Panc1 (cell line): ENCODE measurements at regions of chr5 and their contacts with region 1.

Region 1: DNA sequence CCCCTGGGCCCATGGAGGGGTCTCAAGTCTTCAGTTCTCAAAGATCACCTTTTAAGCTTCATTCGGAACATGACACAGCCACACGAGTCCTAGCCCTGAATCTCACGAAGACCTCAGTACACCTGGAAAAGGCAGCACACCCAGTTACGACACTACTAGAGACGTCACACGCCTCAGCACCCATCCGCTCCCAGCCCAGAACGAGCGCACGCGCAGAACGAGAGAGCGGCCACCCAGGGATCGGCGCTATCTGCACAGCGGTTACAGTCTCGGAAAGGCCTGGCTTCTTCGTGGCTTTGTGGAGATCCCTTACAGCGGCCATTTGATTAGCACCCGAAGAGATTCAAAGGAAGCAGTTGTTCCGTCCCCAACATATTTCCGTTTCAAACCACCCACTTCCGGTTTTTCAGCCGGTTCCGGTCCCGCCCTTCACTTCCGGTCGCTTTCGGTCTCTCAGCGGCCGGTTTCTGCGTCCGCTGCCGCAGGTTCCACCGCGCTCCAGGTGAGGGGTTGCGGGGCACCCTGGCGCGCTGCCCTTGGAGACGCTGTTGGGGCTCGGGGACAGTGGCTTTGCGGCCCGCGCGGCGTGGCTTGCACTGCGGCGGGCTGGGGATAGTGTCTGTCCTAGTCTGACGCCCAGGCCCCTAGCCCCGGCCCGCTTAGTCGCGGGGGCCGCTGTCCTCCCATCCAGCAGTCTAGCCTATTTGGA is at the start of gene UBLCP1:
- DNase-seq: peak; percentile 85
- ATAC-seq: peak; percentile 96
- H3K4me3 ChIP-seq: peak within 1 kb of the TSS; percentile 75 to 99
- H3K27ac ChIP-seq: peak within 1 kb of the TSS; percentile 98
- H3K4me1 ChIP-seq: peaks cover 8% of the 10 kb centered on the region
- H3K27me3 ChIP-seq: no peaks in the 10 kb centered on the region
- CTCF ChIP-seq: no peak
- total RNA-seq, gene UBLCP1: 31.8 TPM

Region 2: GRCh38 chr5:159209438-159210305 is 53.3 kb before region 1 on chr5 and contains the start of gene RNF145:
- CTCF ChIA-PET with region 1: no interaction called
- POLR2A ChIA-PET with region 1: interaction called, 3 read pairs
- in situ Hi-C with region 1: no loop called
- intact Hi-C with region 1: loop called (anchors 5 kb)
- DNase-seq: peak; percentile 56
- ATAC-seq: peak; percentile 84
- H3K4me3 ChIP-seq: peak within 1 kb of the TSS; percentile 75 to 95
- H3K27ac ChIP-seq: peak within 1 kb of the TSS; percentile 89
- H3K4me1 ChIP-seq: peaks cover 40% of the 10 kb centered on the region
- H3K27me3 ChIP-seq: no peaks in the 10 kb centered on the region
- CTCF ChIP-seq: no peak
- total RNA-seq, gene RNF145: 81.8 TPM

Region 3: GRCh38 chr5:159331093-159331973 is 68.3 kb after region 1 on chr5:
- CTCF ChIA-PET with region 1: no interaction called
- POLR2A ChIA-PET with region 1: no interaction called
- in situ Hi-C with region 1: no loop called
- intact Hi-C with region 1: no loop called
- DNase-seq: no peak
- ATAC-seq: peak; percentile 93
- H3K4me3 ChIP-seq: peak overlapping the region; percentile 42 to 49
- H3K27ac ChIP-seq: no peak overlapping the region
- H3K4me1 ChIP-seq: no peaks in the 10 kb centered on the region
- H3K27me3 ChIP-seq: peaks cover 11% of the 10 kb centered on the region
- CTCF ChIP-seq: peak; percentile 94